Heart left ventricle (tissue), 16 donors: ENCODE measurements at regions of chr1 and their contacts with region 1.

Region 1: DNA sequence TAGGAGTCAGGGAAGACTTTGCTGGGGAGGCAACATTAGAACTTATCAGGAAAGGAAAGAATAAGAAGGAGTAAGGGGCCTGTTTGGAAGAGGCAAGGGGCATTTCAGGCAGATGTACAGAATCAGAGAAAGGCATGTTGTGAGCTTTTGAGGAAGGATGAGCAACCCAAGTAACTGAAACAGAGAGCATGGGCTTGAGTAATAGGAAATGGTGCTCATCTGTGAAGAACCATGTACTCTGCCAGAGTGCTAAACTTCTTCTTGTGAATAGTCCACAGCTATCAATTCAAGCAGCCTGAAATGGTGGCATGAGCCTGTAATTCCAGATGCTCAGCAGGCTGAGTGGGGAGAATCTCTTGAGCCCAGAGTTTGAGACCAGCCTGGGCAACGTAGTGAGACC is 19.2 kb upstream of the PIGK start:
- DNase-seq: no peak
- ATAC-seq: no peak
- H3K4me3 ChIP-seq: no peak overlapping the region
- H3K27ac ChIP-seq: no peak overlapping the region
- H3K4me1 ChIP-seq: no peaks in the 10 kb centered on the region
- H3K27me3 ChIP-seq: peaks cover 0 to 5% (median 0%) of the 10 kb centered on the region in 9 donors
- CTCF ChIP-seq: no peak
- POLR2A ChIP-seq: no peak

Region 2: DNA sequence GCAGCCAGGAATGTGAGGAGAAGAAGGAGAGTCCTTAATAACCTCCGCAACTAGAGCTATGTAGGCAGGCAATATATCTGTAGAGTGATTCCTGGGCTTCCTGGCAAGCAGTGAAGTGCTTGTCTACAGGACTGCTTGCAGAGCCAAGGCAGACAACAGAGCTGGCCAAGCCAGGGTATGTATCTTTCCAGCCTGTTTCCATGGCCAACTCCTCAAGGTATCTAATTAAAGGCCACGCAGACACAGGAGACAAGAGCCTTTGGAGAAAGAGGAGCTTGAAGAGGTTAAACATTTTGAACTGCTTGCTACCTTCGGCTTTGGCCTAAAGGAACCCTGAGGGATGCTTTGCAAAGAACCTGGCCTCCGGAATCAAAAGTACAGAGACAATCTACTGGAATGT is 156.6 kb before region 1 on chr1:
- intact Hi-C with region 1: no loop called
- DNase-seq: peak in 2 of 5 donors; percentile 33 to 43
- ATAC-seq: peak in 3 of 4 donors; percentile 64 to 88 (median 84)
- H3K4me3 ChIP-seq: no peak overlapping the region
- H3K27ac ChIP-seq: no peak overlapping the region
- H3K4me1 ChIP-seq: peaks cover 0 to 4% (median 0%) of the 10 kb centered on the region in 12 donors
- H3K27me3 ChIP-seq: no peaks in the 10 kb centered on the region
- CTCF ChIP-seq: no peak
- POLR2A ChIP-seq: no peak

Region 3: GRCh38 chr1:77193951-77194350 is 44.5 kb before region 1 on chr1:
- intact Hi-C with region 1: loop called in 1 of 10 experiments (anchors 5 kb)
- DNase-seq: no peak
- ATAC-seq: no peak
- H3K4me3 ChIP-seq: no peak overlapping the region
- H3K27ac ChIP-seq: no peak overlapping the region
- H3K4me1 ChIP-seq: no peaks in the 10 kb centered on the region
- H3K27me3 ChIP-seq: no peaks in the 10 kb centered on the region
- CTCF ChIP-seq: no peak
- POLR2A ChIP-seq: no peak